Colonic mucosa (tissue), 4 donors: ENCODE measurements at regions of chr14 and their contacts with region 1.

Region 1: DNA sequence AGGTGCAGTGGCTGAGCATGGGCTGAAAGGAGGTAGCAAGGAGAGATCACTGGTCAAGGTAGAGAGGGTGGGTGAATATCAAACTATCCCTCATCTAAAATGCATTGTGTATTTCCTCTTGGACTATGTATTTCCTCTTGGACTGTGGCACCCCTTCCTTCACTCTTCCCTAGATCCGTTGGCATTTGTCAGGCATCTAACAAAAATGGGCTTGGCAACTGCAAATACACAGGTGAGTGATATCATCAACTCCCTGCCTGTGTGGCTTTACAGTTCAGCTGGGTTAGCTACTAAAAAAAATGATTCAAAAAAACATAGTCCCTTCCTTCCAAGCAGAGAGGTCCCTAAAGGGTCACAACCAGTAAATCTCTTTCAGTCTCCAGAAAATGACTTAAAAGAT is 142.8 kb upstream of the FUT8 start:
- DNase-seq: no peak
- H3K4me3 ChIP-seq: no peak overlapping the region
- H3K27ac ChIP-seq: no peak overlapping the region
- H3K4me1 ChIP-seq: no peaks in the 10 kb centered on the region
- H3K27me3 ChIP-seq: no peaks in the 10 kb centered on the region
- CTCF ChIP-seq: no peak

Region 2: DNA sequence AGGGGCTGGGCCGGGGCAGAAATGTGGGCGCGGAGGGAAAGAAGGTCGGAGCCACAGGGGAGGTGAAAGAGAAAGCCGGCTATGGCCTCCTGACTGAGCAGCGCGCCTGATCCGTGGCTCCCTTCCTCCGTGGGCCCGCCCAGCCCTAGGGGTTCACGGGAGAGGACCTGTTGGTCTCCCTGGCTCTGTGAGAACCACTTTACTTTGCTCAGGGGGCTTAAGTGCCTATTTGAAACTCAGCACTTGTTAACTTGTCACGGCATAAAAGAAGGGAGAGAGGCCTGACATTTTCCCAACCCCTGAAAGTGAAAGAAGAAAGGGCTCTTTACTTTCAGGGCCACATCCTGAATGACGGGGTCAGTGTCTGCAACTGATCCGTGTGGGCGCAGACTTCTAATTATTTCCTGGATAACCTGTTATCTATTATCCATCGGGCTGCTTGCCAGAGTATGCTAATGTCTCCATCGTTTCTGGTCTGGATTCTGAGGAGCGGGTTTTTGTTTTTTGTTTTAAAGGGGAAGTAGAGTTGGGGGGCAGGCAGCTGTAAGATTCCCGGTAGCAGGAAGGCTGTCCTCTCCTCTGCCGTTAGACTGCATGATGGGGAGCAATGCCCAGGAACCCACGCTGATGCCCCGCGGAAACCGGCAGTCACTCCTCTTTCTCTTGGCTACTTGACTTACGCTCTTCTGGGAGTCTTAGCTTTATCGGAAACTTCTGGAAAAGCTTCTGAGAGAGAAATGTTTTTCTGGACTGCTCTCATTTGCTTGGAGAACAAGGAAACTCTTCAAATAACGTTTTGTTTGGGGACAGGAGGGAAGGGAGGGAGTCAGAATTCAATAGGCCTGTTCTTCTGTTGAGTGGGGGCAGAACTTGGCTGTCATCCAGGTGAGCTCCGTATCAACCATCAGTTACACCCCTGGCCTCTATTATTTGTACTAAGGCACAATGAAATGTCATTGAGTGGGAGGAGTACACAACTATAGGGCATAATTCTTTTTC is 39.7 kb before region 1 on chr14:
- intact Hi-C with region 1: no loop called
- DNase-seq: peak; percentile 58
- H3K4me3 ChIP-seq: peak overlapping the region; percentile 22
- H3K27ac ChIP-seq: peak overlapping the region; percentile 84
- H3K4me1 ChIP-seq: no peaks in the 10 kb centered on the region
- H3K27me3 ChIP-seq: no peaks in the 10 kb centered on the region
- CTCF ChIP-seq: no peak

Region 3: GRCh38 chr14:65949711-65950516 is 680.2 kb after region 1 on chr14:
- intact Hi-C with region 1: loop called (anchors 5 kb)
- DNase-seq: peak; percentile 26
- H3K4me3 ChIP-seq: no peak overlapping the region
- H3K27ac ChIP-seq: no peak overlapping the region
- H3K4me1 ChIP-seq: no peaks in the 10 kb centered on the region
- H3K27me3 ChIP-seq: no peaks in the 10 kb centered on the region
- CTCF ChIP-seq: no peak